ENCODE measurements at regions of chr10 and their contacts with region 1.

Region 1: DNA sequence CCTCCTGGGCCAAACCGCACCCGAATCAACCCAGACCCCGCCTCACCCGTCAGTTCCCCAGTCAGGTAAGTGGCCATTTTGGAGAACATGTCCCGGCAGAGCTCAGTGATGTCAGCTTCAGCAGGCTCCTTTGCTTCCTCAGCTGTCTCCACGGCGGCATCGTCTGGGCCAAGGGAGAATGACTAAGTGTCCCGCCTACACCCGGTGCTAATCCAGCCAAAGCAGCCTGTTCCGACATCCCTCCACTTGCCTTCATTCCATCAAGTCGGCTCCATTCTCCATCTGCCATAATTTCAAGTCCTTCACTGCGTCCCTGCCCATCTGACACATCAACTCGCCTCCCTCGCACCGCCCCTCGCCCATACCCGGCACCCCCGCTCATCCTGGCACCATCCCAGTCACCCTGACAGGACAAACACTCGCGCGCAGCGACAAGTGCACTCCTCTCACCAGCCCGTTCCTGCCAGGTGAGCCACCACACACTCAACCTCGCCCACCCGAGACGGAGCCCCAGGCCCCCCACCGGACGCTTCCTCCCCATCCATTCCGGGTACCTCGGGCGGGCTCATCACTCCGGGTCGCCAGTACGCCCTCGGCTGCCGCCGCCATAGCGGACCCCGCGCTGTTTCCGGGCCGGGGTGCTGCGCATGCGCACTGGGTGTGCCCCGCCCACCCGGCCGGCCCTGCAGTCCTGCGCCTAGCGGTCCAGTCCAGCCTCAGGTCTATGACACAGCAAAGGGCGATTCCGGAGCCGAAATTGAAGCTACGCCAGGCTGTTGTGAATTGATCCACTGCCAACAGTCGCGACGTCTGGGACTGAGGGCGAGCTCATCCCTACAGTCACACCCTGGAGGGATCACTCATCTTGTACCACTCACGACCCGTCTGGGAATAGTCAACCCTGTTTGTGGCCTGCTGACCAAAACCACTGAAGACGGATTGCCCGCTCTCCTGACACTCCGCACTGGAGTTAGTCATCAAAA is at the start of gene BLOC1S2:
- DNase-seq: peak; percentile 58 to 92
- H3K4me3 ChIP-seq: peak within 1 kb of the TSS; percentile 95 to 97
- H3K27ac ChIP-seq: peak within 1 kb of the TSS; percentile 97 to 99
- H3K4me1 ChIP-seq: peaks cover 0 to 21% of the 10 kb centered on the region in 2 donors
- H3K27me3 ChIP-seq: no peaks in the 10 kb centered on the region
- CTCF ChIP-seq: peak in 1 of 3 experiments; percentile 12
- total RNA-seq, gene BLOC1S2: 21.4 TPM

Region 2: GRCh38 chr10:100229819-100230422 is 56.4 kb before region 1 on chr10:
- intact Hi-C with region 1: loop called (anchors 1 kb)
- DNase-seq: no peak
- H3K4me3 ChIP-seq: peak overlapping the region; percentile 83 to 87
- H3K27ac ChIP-seq: peak overlapping the region; percentile 64 to 79
- H3K4me1 ChIP-seq: peaks cover 0 to 11% of the 10 kb centered on the region in 2 donors
- H3K27me3 ChIP-seq: no peaks in the 10 kb centered on the region
- CTCF ChIP-seq: no peak

Region 3: DNA sequence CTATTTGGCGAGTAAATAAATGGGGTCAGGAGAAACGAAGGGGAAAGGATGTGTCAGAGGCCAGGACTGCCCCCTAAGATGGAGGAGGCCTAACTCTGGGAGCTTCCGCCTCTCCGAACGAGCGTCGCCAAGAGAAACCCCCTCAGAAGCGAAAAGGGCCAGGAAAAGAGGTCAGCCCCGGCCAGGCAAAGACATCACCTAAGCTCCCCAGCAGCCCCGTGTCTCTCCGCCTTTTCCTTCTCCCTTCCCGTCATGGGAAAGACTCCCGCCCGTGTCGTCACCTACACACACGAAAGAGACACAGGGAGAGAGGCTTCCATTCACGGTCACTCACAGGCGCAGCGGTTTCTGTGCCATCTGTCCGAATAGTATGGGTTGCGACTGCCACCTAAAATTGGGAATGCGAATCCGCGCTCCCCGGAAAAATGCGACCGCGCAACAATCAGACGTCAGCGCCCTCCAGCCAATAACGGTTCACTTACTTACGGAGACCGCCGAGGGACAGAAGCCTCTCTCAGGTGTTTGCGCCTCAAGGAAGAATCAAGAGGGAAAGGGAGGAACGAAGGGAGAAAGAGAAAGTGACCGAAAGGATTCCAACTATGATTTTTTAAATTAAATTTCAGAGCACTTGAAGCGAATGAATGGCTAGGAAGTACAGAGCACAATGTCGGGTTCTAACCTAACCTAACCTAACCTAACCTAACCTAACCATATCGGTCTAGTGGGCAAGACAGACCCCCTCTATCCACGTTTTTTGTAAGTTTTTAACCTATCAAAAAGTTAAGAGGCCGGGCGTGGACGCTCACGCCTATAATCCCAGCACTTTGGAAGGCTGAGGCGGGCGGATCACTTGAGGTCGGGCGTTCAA is 18.9 kb before region 1 on chr10 and contains the start of gene CWF19L1:
- intact Hi-C with region 1: loop called (anchors 1 kb)
- DNase-seq: peak; percentile 47 to 91
- H3K4me3 ChIP-seq: peak within 1 kb of the TSS; percentile 73 to 89
- H3K27ac ChIP-seq: peak within 1 kb of the TSS; percentile 70 to 84
- H3K4me1 ChIP-seq: peaks cover 4 to 11% of the 10 kb centered on the region in 2 donors
- H3K27me3 ChIP-seq: no peaks in the 10 kb centered on the region
- CTCF ChIP-seq: no peak
- total RNA-seq, gene CWF19L1: 14.3 TPM

Region 4: GRCh38 chr10:100535715-100536353 is 249.5 kb after region 1 on chr10 and contains the start of gene HIF1AN:
- intact Hi-C with region 1: loop called (anchors 5 kb)
- DNase-seq: peak; percentile 67 to 95
- H3K4me3 ChIP-seq: peak within 1 kb of the TSS; percentile 79 to 86
- H3K27ac ChIP-seq: peak within 1 kb of the TSS; percentile 70 to 81
- H3K4me1 ChIP-seq: peaks cover 0 to 14% of the 10 kb centered on the region in 2 donors
- H3K27me3 ChIP-seq: no peaks in the 10 kb centered on the region
- CTCF ChIP-seq: peak; percentile 67 to 97 (median 92)
- total RNA-seq, gene HIF1AN: 4.7 TPM

Region 5: DNA sequence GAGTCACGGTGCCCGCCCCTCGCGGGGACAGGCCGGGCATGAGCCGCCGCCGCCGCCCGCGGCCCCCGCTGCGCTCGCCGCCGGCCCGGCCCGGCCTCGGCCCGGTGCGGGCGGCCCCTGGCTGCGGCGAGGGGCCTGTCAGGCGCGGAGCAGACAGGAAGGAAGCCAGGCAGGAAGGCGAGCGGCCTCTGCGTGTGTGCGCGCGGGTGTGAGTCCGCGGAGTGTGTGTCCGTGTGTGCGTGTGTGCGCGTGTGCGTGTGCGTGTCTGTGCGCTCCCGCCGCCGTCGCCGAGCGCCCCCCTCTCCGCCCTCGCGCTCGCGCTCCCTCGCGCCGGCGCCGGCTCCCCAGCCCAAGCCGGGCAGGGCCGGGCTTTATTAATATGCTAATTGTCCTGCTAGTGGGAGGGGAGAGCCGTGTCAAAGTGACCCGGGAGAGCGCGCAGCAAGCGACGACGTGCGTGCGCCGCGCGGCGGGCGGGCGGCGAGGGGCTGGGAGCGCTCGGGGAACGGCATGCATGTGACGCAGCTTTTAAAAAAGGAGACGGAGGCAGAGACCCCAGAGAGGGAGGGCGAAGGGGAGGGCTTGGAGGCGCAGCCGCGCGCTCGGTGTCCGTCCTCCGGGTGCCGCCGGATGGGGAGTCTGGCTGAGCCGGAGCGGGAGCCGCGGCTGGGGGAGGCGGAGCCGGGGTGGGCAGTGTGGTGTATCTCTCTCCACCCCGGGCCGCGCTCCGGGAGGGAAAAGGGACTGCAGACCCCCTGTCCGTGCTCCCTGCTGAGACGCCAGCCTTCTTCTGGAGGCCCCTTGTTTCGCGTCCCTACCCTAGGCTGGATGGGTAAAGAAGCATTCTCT is 1834.0 kb after region 1 on chr10 and contains the start of gene LDB1:
- intact Hi-C with region 1: loop called (anchors 5 kb)
- DNase-seq: peak in 1 of 2 donors; percentile 86
- H3K4me3 ChIP-seq: peak within 1 kb of the TSS; percentile 88 to 94
- H3K27ac ChIP-seq: peak within 1 kb of the TSS; percentile 98 to 100
- H3K4me1 ChIP-seq: peaks cover 24 to 37% of the 10 kb centered on the region in 2 donors
- H3K27me3 ChIP-seq: no peaks in the 10 kb centered on the region
- CTCF ChIP-seq: peak in 1 of 3 experiments; percentile 34
- total RNA-seq, gene LDB1: 29.8 TPM

Measured in ascending aorta (tissue), 2 donors.